ENCODE measurements at regions of chr19 and their contacts with region 1.

Region 1: DNA sequence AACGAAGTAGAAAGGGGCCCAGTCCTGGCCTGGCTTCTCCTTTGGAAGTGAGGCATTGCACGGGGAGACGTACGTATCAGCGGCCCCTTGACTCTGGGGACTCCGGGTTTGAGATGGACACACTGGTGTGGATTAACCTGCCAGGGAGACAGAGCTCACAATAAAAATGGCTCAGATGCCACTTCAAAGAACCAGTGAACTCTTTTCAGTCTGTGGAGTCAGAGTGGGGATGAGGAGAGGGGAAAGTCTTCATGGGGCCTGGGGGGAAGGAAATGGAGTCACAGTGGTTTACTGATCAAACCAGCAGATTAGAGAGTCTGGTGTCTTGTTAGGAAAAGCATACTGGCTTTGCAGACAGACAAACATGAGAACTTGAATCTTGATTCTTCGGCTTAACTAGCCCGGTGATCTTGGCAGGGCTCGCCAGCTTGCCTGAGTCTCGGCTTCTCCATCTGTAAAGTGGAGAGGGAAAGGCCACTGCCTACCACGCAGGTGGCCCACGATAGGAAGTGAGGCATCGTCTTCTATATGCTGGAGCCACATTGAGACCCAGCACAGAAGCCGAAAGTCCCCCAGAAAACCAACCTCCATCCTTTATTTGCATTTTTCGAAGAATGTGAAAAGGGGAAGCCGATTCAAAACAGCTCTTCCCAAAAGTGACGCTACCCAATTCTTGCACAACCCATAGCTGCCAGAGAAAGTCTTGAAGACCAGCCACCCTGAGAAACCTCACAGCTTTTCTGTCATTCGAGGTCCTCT is at the start of gene FFAR1:
- DNase-seq: no peak
- ATAC-seq: no peak
- H3K4me3 ChIP-seq: no peak within 1 kb of the TSS
- H3K27ac ChIP-seq: no peak within 1 kb of the TSS
- H3K4me1 ChIP-seq: no peaks in the 10 kb centered on the region
- H3K27me3 ChIP-seq: peaks cover 11% of the 10 kb centered on the region
- CTCF ChIP-seq: no peak
- POLR2A ChIP-seq: no peak
- RAD21 ChIP-seq: no peak
- total RNA-seq, gene FFAR1: not detected in 2 replicates

Region 2: GRCh38 chr19:35592226-35592625 is 244.9 kb after region 1 on chr19:
- CTCF ChIA-PET with region 1: no interaction called
- POLR2A ChIA-PET with region 1: no interaction called
- dilution Hi-C with region 1: no loop called
- in situ Hi-C with region 1: loop called (anchors 25 kb)
- intact Hi-C with region 1: no loop called
- DNase-seq: peak; percentile 37
- ATAC-seq: peak; percentile 35; the same call in 1 of the 2 replicates
- H3K4me3 ChIP-seq: no peak overlapping the region
- H3K27ac ChIP-seq: no peak overlapping the region
- H3K4me1 ChIP-seq: no peaks in the 10 kb centered on the region
- H3K27me3 ChIP-seq: peaks cover 4% of the 10 kb centered on the region; the same call in 1 of the 2 replicates
- CTCF ChIP-seq: peak; percentile 55
- POLR2A ChIP-seq: no peak
- RAD21 ChIP-seq: peak; percentile 62